ENCODE measurements at regions of chr3 and their contacts with region 1.

Region 1: DNA sequence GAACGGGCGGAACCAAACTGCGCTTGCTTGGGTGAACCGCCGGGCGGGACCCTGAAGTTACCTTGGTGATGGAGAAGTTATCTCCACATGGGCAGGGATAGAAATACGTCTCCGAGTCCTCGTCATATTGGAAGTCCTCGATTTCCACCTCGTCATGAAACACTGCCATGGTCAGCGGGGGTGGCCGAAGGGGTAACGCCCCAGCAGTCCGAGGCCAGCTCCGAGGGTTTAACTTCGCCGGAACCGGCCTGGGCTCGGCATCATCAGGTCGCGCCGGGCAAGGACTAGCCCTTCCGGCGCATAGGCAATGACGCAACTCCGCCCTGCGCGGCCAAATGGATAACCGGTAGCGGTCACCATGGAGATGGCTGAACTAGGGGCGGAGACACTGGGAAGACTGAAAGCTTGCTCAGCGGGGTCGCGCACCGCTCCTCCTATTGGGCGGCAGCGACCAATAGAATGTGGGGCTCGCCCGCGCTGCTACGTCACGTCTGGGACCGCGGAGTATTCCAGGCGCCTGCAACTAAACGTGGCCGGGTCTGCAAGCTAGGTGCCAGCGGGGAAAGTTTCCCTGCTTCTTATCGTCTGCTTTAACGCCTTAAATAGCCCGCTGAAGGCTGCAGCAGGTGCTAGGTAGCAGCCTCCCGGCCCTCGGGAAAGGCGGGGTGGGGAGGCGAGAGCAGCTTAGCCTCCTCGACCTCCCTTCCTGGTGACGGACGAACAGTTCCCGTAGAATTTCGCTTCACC is at the starts of genes DPH3 and OXNAD1:
- DNase-seq: peak; percentile 98 to 100 (median 99)
- H3K4me3 ChIP-seq: peak within 1 kb of the TSS; percentile 88
- H3K4me3 Mint-ChIP-seq: peak within 1 kb of the TSS; percentile 93 to 99 (median 97)
- H3K27ac ChIP-seq: peak within 1 kb of the TSS; percentile 95
- H3K27ac Mint-ChIP-seq: peak within 1 kb of the TSS; percentile 95 to 100 (median 100)
- H3K4me1 ChIP-seq: peaks cover 19% of the 10 kb centered on the region
- H3K4me1 Mint-ChIP-seq: peaks cover 37 to 41% (median 38%) of the 10 kb centered on the region in 3 donors
- H3K27me3 ChIP-seq: no peaks in the 10 kb centered on the region
- H3K27me3 Mint-ChIP-seq: peaks cover 0 to 4% of the 10 kb centered on the region in 2 donors
- total RNA-seq, gene DPH3: 31.7 to 32.8 TPM
- total RNA-seq, gene OXNAD1: 28.6 to 30.1 TPM

Region 2: GRCh38 chr3:15682561-15683185 is 582.2 kb before region 1 on chr3:
- CTCF ChIA-PET with region 1: no interaction called
- POLR2A ChIA-PET with region 1: no interaction called
- DNase-seq: no peak
- H3K4me3 ChIP-seq: no peak overlapping the region
- H3K4me3 Mint-ChIP-seq: no peak overlapping the region
- H3K27ac ChIP-seq: no peak overlapping the region
- H3K27ac Mint-ChIP-seq: no peak overlapping the region
- H3K4me1 ChIP-seq: no peaks in the 10 kb centered on the region
- H3K4me1 Mint-ChIP-seq: peaks cover 0 to 4% (median 0%) of the 10 kb centered on the region in 3 donors
- H3K27me3 ChIP-seq: no peaks in the 10 kb centered on the region
- H3K27me3 Mint-ChIP-seq: no peaks in the 10 kb centered on the region

Region 3: DNA sequence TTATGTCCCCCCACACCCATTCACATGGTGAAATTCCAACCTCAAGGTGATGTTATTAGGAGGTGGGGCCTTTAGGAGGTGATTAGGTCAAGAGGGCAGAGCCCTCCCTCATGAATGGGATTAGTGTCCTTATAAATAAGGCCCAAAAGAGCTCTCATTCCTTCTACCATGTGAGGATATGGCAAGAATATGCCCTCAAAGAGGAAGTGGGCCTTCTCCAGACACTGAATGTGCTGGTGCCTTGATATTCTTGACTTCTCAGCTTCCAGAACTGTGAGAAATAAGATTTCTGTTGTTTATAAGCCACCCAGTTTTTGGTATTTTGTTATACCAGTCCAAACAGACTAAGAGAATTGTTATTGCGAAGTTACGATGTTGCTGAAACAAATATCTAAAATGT is 561.5 kb before region 1 on chr3:
- CTCF ChIA-PET with region 1: no interaction called
- POLR2A ChIA-PET with region 1: no interaction called
- DNase-seq: no peak
- H3K4me3 ChIP-seq: no peak overlapping the region
- H3K4me3 Mint-ChIP-seq: no peak overlapping the region
- H3K27ac ChIP-seq: no peak overlapping the region
- H3K27ac Mint-ChIP-seq: peak overlapping the region in 1 of 8 donors; percentile 6
- H3K4me1 ChIP-seq: no peaks in the 10 kb centered on the region
- H3K4me1 Mint-ChIP-seq: no peaks in the 10 kb centered on the region
- H3K27me3 ChIP-seq: no peaks in the 10 kb centered on the region
- H3K27me3 Mint-ChIP-seq: no peaks in the 10 kb centered on the region

Region 4: GRCh38 chr3:15923640-15924405 is 341.1 kb before region 1 on chr3:
- CTCF ChIA-PET with region 1: no interaction called
- POLR2A ChIA-PET with region 1: no interaction called
- DNase-seq: peak in 1 of 5 donors; percentile 4
- H3K4me3 ChIP-seq: no peak overlapping the region
- H3K4me3 Mint-ChIP-seq: no peak overlapping the region
- H3K27ac ChIP-seq: no peak overlapping the region
- H3K27ac Mint-ChIP-seq: no peak overlapping the region
- H3K4me1 ChIP-seq: no peaks in the 10 kb centered on the region
- H3K4me1 Mint-ChIP-seq: peaks cover 0 to 4% (median 3%) of the 10 kb centered on the region in 3 donors
- H3K27me3 ChIP-seq: no peaks in the 10 kb centered on the region
- H3K27me3 Mint-ChIP-seq: peaks cover 1 to 4% of the 10 kb centered on the region in 2 donors

Region 5: GRCh38 chr3:16177962-16178627 is 86.8 kb before region 1 on chr3:
- CTCF ChIA-PET with region 1: no interaction called
- POLR2A ChIA-PET with region 1: no interaction called
- DNase-seq: peak; percentile 20 to 59 (median 31)
- H3K4me3 ChIP-seq: no peak overlapping the region
- H3K4me3 Mint-ChIP-seq: no peak overlapping the region
- H3K27ac ChIP-seq: no peak overlapping the region
- H3K27ac Mint-ChIP-seq: no peak overlapping the region
- H3K4me1 ChIP-seq: no peaks in the 10 kb centered on the region
- H3K4me1 Mint-ChIP-seq: peaks cover 0 to 12% (median 10%) of the 10 kb centered on the region in 3 donors
- H3K27me3 ChIP-seq: no peaks in the 10 kb centered on the region
- H3K27me3 Mint-ChIP-seq: peaks cover 6 to 37% of the 10 kb centered on the region in 2 donors

Region 6: DNA sequence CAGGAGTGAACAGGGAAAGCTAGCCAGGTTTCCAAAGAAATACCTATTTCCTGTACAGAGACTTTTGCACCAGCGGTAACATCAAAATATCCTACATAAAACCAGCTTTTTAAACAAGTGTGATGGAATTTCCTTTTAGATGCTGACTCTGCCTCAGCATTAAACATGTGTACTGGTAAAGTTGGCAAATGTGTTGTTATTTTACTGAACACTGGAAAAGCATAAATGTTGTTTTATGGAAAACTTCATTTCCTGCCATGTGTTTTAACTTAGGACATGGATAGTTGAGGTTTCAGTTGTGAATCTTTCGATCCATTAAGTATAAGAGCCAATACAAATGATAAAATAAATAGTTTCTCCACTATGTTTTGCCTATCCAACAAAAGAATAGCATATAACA is 15.8 kb after region 1 on chr3:
- CTCF ChIA-PET with region 1: interaction called, 21 read pairs
- POLR2A ChIA-PET with region 1: interaction called, 19 read pairs
- DNase-seq: no peak
- H3K4me3 ChIP-seq: no peak overlapping the region
- H3K4me3 Mint-ChIP-seq: no peak overlapping the region
- H3K27ac ChIP-seq: no peak overlapping the region
- H3K27ac Mint-ChIP-seq: no peak overlapping the region
- H3K4me1 ChIP-seq: peaks cover 14% of the 10 kb centered on the region
- H3K4me1 Mint-ChIP-seq: peaks cover 13 to 22% (median 21%) of the 10 kb centered on the region in 3 donors
- H3K27me3 ChIP-seq: no peaks in the 10 kb centered on the region
- H3K27me3 Mint-ChIP-seq: no peaks in the 10 kb centered on the region

Region 7: DNA sequence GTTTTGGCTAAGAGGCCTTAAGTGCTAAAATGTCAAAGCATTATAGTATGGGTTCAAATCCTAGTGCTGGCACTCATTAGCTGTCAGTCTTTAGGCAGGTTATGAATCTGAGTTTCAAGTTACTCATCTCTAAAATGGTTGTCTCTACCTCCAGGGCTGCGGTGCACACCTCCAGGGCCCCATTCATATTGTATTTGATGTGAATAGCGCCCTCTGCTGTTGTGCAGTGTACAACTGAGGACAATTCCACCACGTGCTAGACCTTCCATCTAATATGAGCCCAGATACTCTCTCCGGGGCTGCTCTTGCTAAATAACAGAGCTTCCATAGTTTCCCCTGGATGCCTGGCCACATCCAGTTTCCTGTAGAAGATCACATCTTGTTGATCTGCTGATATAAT is 54.4 kb after region 1 on chr3:
- CTCF ChIA-PET with region 1: interaction called, 108 read pairs
- POLR2A ChIA-PET with region 1: interaction called, 3 read pairs
- DNase-seq: peak; percentile 65 to 88 (median 73)
- H3K4me3 ChIP-seq: no peak overlapping the region
- H3K4me3 Mint-ChIP-seq: peak overlapping the region in 6 of 7 donors; percentile 1 to 46 (median 30)
- H3K27ac ChIP-seq: no peak overlapping the region
- H3K27ac Mint-ChIP-seq: peak overlapping the region; percentile 79 to 98 (median 92)
- H3K4me1 ChIP-seq: peaks cover 61% of the 10 kb centered on the region
- H3K4me1 Mint-ChIP-seq: peaks cover 66 to 73% (median 66%) of the 10 kb centered on the region in 3 donors
- H3K27me3 ChIP-seq: no peaks in the 10 kb centered on the region
- H3K27me3 Mint-ChIP-seq: peaks cover 0 to 5% of the 10 kb centered on the region in 2 donors

Region 8: DNA sequence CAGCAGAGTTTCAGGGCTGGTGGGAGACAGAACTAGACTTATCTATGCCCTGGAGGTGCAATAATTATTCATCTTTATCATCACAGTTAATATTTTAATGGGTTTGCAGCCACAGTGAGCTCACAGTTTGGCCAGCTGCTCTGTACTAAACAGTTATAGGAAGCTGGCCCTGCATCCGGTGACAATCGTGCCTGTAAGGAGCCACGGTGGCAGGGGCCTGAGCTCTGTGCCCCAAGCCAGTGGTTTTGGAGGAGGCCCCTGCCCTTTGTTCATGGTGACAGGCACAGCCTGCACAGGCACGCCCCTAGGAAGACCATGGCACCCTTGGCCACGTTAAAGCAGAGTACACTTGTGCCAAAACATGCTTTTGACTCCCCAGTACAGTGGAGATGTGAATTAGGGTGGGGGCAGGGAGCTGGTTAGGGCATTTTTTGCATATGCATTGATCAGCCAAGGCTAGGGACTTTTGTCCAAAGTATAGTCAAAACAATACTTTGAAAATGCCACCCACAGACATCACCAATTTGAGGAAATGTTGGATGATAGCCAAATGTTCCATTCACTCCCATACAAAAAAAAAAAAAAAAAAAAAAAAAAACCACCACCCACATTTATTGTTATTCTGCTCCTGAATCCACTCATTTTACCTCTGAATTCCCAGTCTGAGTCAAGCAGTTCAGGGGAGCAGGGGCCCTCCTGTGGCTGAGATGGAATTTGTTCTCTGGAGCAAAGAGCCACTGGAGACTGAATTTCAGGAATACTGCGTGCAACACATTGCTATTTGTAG is 252.0 kb after region 1 on chr3:
- CTCF ChIA-PET with region 1: interaction called, 10 read pairs
- POLR2A ChIA-PET with region 1: interaction called, 8 read pairs
- DNase-seq: peak in 2 of 5 donors; percentile 11 to 59
- H3K4me3 ChIP-seq: no peak overlapping the region
- H3K4me3 Mint-ChIP-seq: peak overlapping the region; percentile 62 to 98 (median 80)
- H3K27ac ChIP-seq: no peak overlapping the region
- H3K27ac Mint-ChIP-seq: peak overlapping the region; percentile 85 to 97 (median 94)
- H3K4me1 ChIP-seq: peaks cover 40% of the 10 kb centered on the region
- H3K4me1 Mint-ChIP-seq: peaks cover 52 to 75% (median 67%) of the 10 kb centered on the region in 3 donors
- H3K27me3 ChIP-seq: no peaks in the 10 kb centered on the region
- H3K27me3 Mint-ChIP-seq: no peaks in the 10 kb centered on the region

Region 9: GRCh38 chr3:16550676-16551341 is 285.9 kb after region 1 on chr3:
- CTCF ChIA-PET with region 1: interaction called, 24 read pairs
- POLR2A ChIA-PET with region 1: no interaction called
- DNase-seq: peak; percentile 45 to 78 (median 71)
- H3K4me3 ChIP-seq: no peak overlapping the region
- H3K4me3 Mint-ChIP-seq: no peak overlapping the region
- H3K27ac ChIP-seq: no peak overlapping the region
- H3K27ac Mint-ChIP-seq: peak overlapping the region in 4 of 8 donors; percentile 7 to 79 (median 65)
- H3K4me1 ChIP-seq: peaks cover 5% of the 10 kb centered on the region
- H3K4me1 Mint-ChIP-seq: peaks cover 6 to 10% (median 7%) of the 10 kb centered on the region in 3 donors
- H3K27me3 ChIP-seq: no peaks in the 10 kb centered on the region
- H3K27me3 Mint-ChIP-seq: peaks cover 1 to 21% of the 10 kb centered on the region in 2 donors

Measured in CD8-positive, alpha-beta memory T cell (primary cell).